Heart right ventricle (tissue), 16 donors: ENCODE measurements at regions of chr1 and their contacts with region 1.

Region 1: GRCh38 chr1:6624710-6625583 is at the start of gene THAP3:
- DNase-seq: peak; percentile 89 to 92
- ATAC-seq: peak; percentile 90 to 95 (median 93)
- H3K4me3 ChIP-seq: peak within 1 kb of the TSS; percentile 64 to 95 (median 86)
- H3K27ac ChIP-seq: peak within 1 kb of the TSS; percentile 54 to 91 (median 85)
- H3K4me1 ChIP-seq: peaks cover 8 to 26% (median 22%) of the 10 kb centered on the region in 9 donors
- H3K27me3 ChIP-seq: no peaks in the 10 kb centered on the region
- CTCF ChIP-seq: peak in 3 of 9 donors; percentile 16 to 38 (median 32)
- total RNA-seq, gene THAP3: 6.8 to 16.7 (median 11.2) TPM

Region 2: GRCh38 chr1:6574025-6574620 is 50.8 kb before region 1 on chr1:
- intact Hi-C with region 1: loop called in 1 of 10 experiments (anchors 5 kb)
- DNase-seq: no peak
- ATAC-seq: no peak
- H3K4me3 ChIP-seq: no peak overlapping the region
- H3K27ac ChIP-seq: no peak overlapping the region
- H3K4me1 ChIP-seq: peaks cover 2 to 16% (median 9%) of the 10 kb centered on the region in 9 donors
- H3K27me3 ChIP-seq: no peaks in the 10 kb centered on the region
- CTCF ChIP-seq: no peak

Region 3: DNA sequence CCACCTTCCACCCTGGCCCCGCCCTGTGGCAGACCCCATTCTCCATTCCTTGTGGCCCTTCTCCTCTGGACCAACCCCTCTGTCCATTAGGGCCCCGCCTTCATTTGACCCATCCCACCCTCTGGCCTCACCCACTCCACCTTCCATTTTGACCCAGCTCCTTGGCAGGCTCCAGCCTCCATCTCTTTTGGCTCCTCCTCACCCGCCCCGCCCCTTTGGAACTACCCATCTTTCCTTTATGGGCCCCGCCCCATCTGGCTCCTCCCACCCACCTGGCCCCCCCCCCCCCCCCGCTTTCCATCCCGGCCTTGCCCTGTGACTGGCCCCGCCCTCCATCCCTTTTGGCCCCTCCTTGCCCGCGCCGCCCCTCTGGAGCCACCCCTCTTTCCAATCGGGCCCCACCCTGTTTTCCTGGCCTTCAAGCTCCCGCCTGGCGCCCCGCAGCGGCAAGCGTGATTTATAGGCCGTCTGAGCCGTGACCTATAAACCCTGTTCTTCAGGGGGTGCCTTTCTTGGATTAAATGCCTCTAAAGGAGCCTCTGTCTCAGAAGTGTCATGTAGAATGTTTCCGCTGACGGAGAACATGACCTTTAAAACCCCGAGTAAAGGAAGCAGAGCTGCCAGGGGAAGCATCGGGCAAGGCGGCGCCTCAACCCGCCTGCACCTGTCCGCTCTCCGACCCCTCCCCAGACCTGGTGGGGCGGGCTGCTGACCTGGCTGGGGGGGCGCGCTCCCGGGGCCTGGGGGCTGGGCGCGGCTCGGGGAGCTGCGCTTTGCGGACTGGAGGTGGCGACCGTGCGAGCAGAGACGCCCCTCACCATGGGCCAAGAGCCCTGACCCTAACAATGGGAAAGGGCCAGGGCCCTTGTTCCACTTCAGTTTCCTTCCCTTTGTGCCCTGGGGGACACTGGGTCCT is 338.3 kb after region 1 on chr1:
- intact Hi-C with region 1: no loop called
- DNase-seq: peak; percentile 58 to 76
- ATAC-seq: peak; percentile 37 to 77 (median 54)
- H3K4me3 ChIP-seq: peak overlapping the region in 2 of 10 donors; percentile 26
- H3K27ac ChIP-seq: peak overlapping the region in 1 of 10 donors; percentile 9
- H3K4me1 ChIP-seq: peaks cover 5 to 28% (median 16%) of the 10 kb centered on the region in 9 donors
- H3K27me3 ChIP-seq: peaks cover 0 to 53% (median 22%) of the 10 kb centered on the region in 7 donors
- CTCF ChIP-seq: peak in 3 of 9 donors; percentile 14 to 34 (median 18)